AG04449 (cell line): ENCODE measurements at regions of chr6 and their contacts with region 1.

Region 1: GRCh38 chr6:111709615-111710398 is 104.1 kb upstream of the TRAF3IP2 start:
- DNase-seq: no peak
- H3K4me3 ChIP-seq: no peak overlapping the region
- CTCF ChIP-seq: peak; percentile 41

Region 2: GRCh38 chr6:111183702-111184517 is 525.9 kb before region 1 on chr6:
- CTCF ChIA-PET with region 1: no interaction called
- POLR2A ChIA-PET with region 1: no interaction called
- DNase-seq: no peak
- H3K4me3 ChIP-seq: no peak overlapping the region
- CTCF ChIP-seq: no peak

Region 3: DNA sequence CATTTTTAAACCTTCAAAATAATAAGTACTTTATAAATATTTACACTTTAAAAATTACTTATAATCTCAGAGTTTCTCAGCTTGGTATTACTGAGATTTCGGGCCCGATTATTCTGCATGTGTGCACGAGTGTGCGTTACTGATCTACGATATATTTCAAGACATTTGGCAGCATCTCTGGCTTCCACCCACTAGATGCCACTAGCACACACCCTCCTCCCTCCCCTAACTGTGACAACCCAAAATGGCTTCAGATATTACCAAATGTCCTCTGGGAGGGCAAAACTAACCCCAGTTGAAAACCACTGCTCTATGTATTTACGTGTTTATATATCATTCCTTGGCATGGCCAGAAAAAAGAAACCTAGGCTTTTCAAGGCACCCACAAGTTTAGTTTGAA is 67.5 kb after region 1 on chr6:
- CTCF ChIA-PET with region 1: no interaction called
- POLR2A ChIA-PET with region 1: no interaction called
- DNase-seq: no peak
- H3K4me3 ChIP-seq: no peak overlapping the region
- CTCF ChIP-seq: peak; percentile 18

Region 4: DNA sequence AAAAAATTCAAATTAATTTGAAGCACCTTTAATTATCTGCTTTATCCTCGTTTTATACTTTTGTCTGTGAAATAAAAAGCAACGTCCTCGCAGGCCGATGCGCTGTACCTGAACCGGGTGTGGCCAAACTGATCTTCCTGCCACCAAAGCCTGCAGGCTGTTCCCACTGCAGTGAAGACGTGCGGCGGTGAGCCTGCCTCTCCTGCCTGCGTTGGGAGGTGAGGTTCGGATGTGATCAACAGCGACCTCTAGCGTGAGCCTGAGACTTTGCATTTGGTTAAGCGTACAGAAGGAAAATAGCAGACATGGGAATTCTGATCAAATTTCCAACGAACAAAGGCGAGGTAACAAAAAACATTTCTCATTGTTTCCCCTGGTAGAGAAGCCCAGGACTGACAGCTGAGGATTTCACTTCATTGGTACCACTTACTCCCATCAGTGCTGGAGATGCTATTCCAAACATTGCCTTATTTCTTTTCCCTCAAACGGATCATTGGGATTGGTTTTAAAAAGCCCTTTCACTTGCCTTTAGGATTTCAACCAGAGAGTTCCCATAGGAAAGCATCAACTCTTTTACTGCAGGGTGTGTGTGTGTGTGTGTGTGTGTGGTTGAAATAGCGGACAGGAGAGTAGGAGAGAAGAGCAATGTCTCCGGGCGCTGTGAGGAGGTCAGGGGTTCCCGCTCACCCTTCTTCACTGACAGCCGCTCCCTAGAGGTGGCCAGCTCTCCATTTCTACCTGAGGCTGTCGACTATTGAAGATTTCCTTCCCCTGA is 287.5 kb after region 1 on chr6:
- CTCF ChIA-PET with region 1: interaction called, 72 read pairs
- POLR2A ChIA-PET with region 1: no interaction called
- DNase-seq: no peak
- H3K4me3 ChIP-seq: no peak overlapping the region
- CTCF ChIP-seq: peak; percentile 83

Region 5: GRCh38 chr6:112018619-112019416 is 309.0 kb after region 1 on chr6:
- CTCF ChIA-PET with region 1: interaction called, 13 read pairs
- POLR2A ChIA-PET with region 1: no interaction called
- DNase-seq: no peak
- H3K4me3 ChIP-seq: no peak overlapping the region
- CTCF ChIP-seq: no peak

Region 6: GRCh38 chr6:112087136-112087911 is 377.5 kb after region 1 on chr6 and contains the starts of genes FAM229B and TUBE1:
- CTCF ChIA-PET with region 1: interaction called, 12 read pairs
- POLR2A ChIA-PET with region 1: no interaction called
- DNase-seq: peak; percentile 93
- H3K4me3 ChIP-seq: peak within 1 kb of the TSS; percentile 85
- CTCF ChIP-seq: peak; percentile 7